Panc1 (cell line): ENCODE measurements at regions of chr14 and their contacts with region 1.

Region 1: GRCh38 chr14:67166450-67166853 is 22.8 kb upstream of the GARIN2 start:
- DNase-seq: peak; percentile 25
- ATAC-seq: peak; percentile 84
- H3K4me3 ChIP-seq: no peak overlapping the region
- H3K27ac ChIP-seq: peak overlapping the region; percentile 86
- H3K4me1 ChIP-seq: peaks cover 23% of the 10 kb centered on the region
- H3K27me3 ChIP-seq: no peaks in the 10 kb centered on the region
- CTCF ChIP-seq: peak; percentile 77

Region 2: DNA sequence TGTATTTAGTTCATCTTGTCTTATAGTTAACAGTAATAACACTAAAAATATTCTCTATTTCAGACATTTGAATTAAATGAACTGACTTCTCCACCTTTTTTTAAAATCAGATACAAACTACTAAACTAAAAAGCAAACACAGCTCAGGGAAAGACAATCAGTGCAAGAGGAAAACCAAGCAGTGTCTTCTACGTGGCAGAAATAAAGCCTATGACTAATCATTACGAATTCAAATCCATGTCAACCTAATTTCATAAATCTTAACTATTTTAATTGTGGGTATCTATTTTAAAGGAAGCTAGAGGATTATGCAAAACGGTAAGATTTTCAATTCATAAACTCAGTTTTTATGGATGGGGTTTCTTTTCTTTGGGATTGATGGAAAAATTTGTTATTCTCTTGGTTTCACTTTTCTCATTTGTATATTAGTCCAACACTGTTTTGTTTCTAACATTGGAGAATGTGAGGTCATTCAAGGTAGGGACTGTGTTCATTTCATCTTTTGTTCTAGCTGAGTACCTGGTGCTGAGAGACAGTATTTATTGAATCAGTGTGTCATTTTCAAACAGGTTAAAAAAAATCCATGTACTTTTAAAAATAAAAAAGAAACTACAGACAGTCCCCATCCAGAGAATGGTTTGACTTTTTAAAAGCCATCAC is 62.0 kb after region 1 on chr14:
- CTCF ChIA-PET with region 1: no interaction called
- POLR2A ChIA-PET with region 1: no interaction called
- in situ Hi-C with region 1: no loop called
- intact Hi-C with region 1: loop called (anchors 5 kb)
- DNase-seq: no peak
- ATAC-seq: no peak; the same call in 1 of the 2 replicates
- H3K4me3 ChIP-seq: peak overlapping the region in 1 of 2 experiments; percentile 18; a peak in 1 of 4 replicates
- H3K27ac ChIP-seq: peak overlapping the region; percentile 88
- H3K4me1 ChIP-seq: peaks cover 28% of the 10 kb centered on the region
- H3K27me3 ChIP-seq: no peaks in the 10 kb centered on the region
- CTCF ChIP-seq: no peak

Region 3: DNA sequence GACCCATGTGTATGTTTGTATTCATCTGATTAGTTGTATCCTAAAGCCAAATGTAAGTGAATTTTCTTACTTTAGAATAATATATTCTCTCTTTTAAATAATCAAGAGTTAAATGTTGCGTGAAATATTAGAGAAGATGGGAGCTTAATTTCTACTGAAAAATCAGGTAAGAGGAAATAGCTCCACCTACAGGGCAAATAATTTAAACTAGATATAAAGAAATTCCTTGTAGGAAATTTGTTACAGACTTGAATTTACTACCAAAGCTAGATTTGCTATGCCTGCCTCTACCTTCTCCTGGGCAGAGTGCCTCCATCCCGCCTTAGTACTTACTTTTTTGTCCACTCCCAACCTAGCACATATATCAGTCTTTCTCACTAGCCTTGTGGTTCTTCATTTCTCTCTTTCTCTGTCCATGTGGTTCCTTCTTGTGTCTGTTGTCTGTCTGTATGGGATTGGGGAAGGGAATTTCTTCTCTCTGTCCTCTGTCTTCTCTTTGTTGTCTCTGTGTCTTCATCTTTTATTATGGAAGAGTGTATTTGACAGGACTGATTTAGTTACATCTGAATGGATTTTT is 119.5 kb after region 1 on chr14:
- CTCF ChIA-PET with region 1: interaction called, 4 read pairs
- POLR2A ChIA-PET with region 1: no interaction called
- in situ Hi-C with region 1: no loop called
- intact Hi-C with region 1: loop called (anchors 1 kb)
- DNase-seq: no peak
- ATAC-seq: peak; percentile 38; the same call in 1 of the 2 replicates
- H3K4me3 ChIP-seq: no peak overlapping the region
- H3K27ac ChIP-seq: peak overlapping the region; percentile 68
- H3K4me1 ChIP-seq: peaks cover 18% of the 10 kb centered on the region
- H3K27me3 ChIP-seq: no peaks in the 10 kb centered on the region
- CTCF ChIP-seq: peak; percentile 65; the same call in 1 of the 2 replicates